Caco-2 (cell line): ENCODE measurements at regions of chr18 and their contacts with region 1.

Region 1: GRCh38 chr18:21914739-21915319 is 174.2 kb downstream of the MIB1 start:
- DNase-seq: peak; percentile 69 to 73
- H3K4me3 ChIP-seq: no peak overlapping the region
- H3K4me3 Mint-ChIP-seq: no peak overlapping the region
- H3K27ac Mint-ChIP-seq: no peak overlapping the region
- H3K4me1 ChIP-seq: peaks cover 29% of the 10 kb centered on the region
- H3K4me1 Mint-ChIP-seq: peaks cover 24% of the 10 kb centered on the region
- H3K27me3 ChIP-seq: no peaks in the 10 kb centered on the region
- H3K27me3 Mint-ChIP-seq: no peaks in the 10 kb centered on the region
- CTCF ChIP-seq: peak; percentile 78 to 84

Region 2: GRCh38 chr18:21741511-21742314 is 173.1 kb before region 1 on chr18:
- CTCF ChIA-PET with region 1: no interaction called
- POLR2A ChIA-PET with region 1: no interaction called
- intact Hi-C with region 1: no loop called
- DNase-seq: peak in 1 of 2 experiments; percentile 46
- H3K4me3 ChIP-seq: peak overlapping the region; percentile 99
- H3K4me3 Mint-ChIP-seq: peak overlapping the region; percentile 74
- H3K27ac Mint-ChIP-seq: no peak overlapping the region
- H3K4me1 ChIP-seq: peaks cover 6% of the 10 kb centered on the region; the same call in 1 of the 2 replicates
- H3K4me1 Mint-ChIP-seq: peaks cover 14% of the 10 kb centered on the region
- H3K27me3 ChIP-seq: no peaks in the 10 kb centered on the region
- H3K27me3 Mint-ChIP-seq: no peaks in the 10 kb centered on the region
- CTCF ChIP-seq: peak in 1 of 2 experiments; percentile 18

Region 3: DNA sequence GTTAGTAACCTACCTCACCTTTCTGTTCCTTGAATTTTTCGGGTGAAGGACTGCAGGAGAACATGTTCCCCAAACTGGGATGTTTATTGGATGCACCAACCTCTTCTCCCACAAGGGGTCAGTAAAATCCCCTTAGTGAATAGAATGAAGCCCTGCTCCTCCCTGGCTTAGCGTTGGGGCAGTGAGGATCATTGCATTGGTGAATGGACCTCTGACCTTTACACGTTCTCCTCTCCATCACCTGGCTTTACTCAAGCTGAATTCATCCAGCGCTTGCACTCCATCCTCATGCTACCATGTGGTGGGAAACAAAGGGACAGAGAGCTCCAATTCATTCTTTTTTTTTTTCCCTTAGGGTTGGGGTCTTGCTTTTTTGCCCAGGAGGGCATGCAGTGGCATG is 17.0 kb before region 1 on chr18:
- CTCF ChIA-PET with region 1: no interaction called
- POLR2A ChIA-PET with region 1: no interaction called
- intact Hi-C with region 1: loop called (anchors 1 kb)
- DNase-seq: peak; percentile 67 to 80
- H3K4me3 ChIP-seq: no peak overlapping the region
- H3K4me3 Mint-ChIP-seq: no peak overlapping the region
- H3K27ac Mint-ChIP-seq: no peak overlapping the region
- H3K4me1 ChIP-seq: no peaks in the 10 kb centered on the region
- H3K4me1 Mint-ChIP-seq: peaks cover 11% of the 10 kb centered on the region
- H3K27me3 ChIP-seq: no peaks in the 10 kb centered on the region
- H3K27me3 Mint-ChIP-seq: no peaks in the 10 kb centered on the region
- CTCF ChIP-seq: peak; percentile 66 to 82

Region 4: DNA sequence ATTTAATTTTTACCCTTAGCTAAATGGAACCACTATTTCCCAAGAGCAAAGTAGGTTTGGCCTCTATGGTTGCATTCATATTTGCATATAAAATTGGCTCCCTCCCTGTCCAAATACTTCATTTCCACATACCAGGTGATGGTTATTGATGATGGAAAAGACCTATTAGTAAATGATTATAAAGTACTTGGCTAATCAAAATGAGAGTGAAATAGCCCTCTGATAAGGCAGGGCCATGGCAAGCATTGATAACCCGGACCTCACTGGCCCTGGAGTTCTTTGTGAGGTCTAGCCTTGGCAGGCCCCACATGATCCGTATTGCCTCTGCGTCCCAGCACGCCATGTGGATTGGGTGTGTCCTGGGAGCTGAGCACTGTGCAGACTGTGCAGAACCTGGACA is 53.5 kb after region 1 on chr18:
- CTCF ChIA-PET with region 1: no interaction called
- POLR2A ChIA-PET with region 1: no interaction called
- intact Hi-C with region 1: no loop called
- DNase-seq: no peak
- H3K4me3 ChIP-seq: no peak overlapping the region
- H3K4me3 Mint-ChIP-seq: no peak overlapping the region
- H3K27ac Mint-ChIP-seq: no peak overlapping the region
- H3K4me1 ChIP-seq: peaks cover 6% of the 10 kb centered on the region; the same call in 1 of the 2 replicates
- H3K4me1 Mint-ChIP-seq: no peaks in the 10 kb centered on the region
- H3K27me3 ChIP-seq: no peaks in the 10 kb centered on the region
- H3K27me3 Mint-ChIP-seq: no peaks in the 10 kb centered on the region
- CTCF ChIP-seq: no peak

Region 5: GRCh38 chr18:21991081-21991581 is 76.3 kb after region 1 on chr18:
- CTCF ChIA-PET with region 1: no interaction called
- POLR2A ChIA-PET with region 1: no interaction called
- intact Hi-C with region 1: loop called (anchors 2 kb)
- DNase-seq: peak; percentile 91 to 96
- H3K4me3 ChIP-seq: no peak overlapping the region
- H3K4me3 Mint-ChIP-seq: peak overlapping the region; percentile 59
- H3K27ac Mint-ChIP-seq: peak overlapping the region; percentile 96
- H3K4me1 ChIP-seq: peaks cover 76% of the 10 kb centered on the region
- H3K4me1 Mint-ChIP-seq: peaks cover 31% of the 10 kb centered on the region
- H3K27me3 ChIP-seq: no peaks in the 10 kb centered on the region
- H3K27me3 Mint-ChIP-seq: no peaks in the 10 kb centered on the region
- CTCF ChIP-seq: no peak

Region 6: GRCh38 chr18:22084547-22084946 is 169.7 kb after region 1 on chr18:
- CTCF ChIA-PET with region 1: interaction called, 3 read pairs
- POLR2A ChIA-PET with region 1: no interaction called
- intact Hi-C with region 1: loop called (anchors 10 kb)
- DNase-seq: peak; percentile 78 to 91
- H3K4me3 ChIP-seq: peak overlapping the region; percentile 3; the same call in 1 of the 2 replicates
- H3K4me3 Mint-ChIP-seq: peak overlapping the region; percentile 69
- H3K27ac Mint-ChIP-seq: peak overlapping the region; percentile 87
- H3K4me1 ChIP-seq: peaks cover 75% of the 10 kb centered on the region
- H3K4me1 Mint-ChIP-seq: peaks cover 61% of the 10 kb centered on the region
- H3K27me3 ChIP-seq: no peaks in the 10 kb centered on the region
- H3K27me3 Mint-ChIP-seq: no peaks in the 10 kb centered on the region
- CTCF ChIP-seq: no peak

Region 7: DNA sequence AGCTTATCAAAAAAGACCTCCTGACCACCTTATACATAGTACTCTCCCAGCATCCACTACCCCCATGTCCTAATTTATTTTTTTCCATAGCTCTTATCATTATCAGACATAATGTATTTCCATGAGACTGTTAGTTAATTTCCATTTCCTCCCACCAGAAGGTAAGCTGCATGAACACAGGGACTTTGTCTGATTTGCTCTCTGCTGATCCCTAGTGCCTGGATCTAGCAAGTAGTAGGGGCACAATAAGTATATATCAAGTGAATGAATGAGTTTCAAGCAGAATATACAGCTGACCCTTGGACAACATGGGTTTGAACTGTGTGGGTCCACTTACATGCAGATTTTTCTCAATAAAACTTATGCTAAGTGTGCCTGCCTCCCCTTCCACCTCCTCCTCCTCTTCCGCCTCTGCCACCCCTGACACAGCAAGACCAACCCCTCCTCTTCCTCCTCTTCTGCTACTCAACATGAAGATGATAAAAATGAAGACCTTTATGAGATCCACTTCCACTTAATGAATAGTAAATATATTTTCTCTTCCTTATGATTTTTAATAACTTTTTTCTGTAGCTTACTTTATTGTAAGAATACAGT is 449.1 kb after region 1 on chr18:
- CTCF ChIA-PET with region 1: no interaction called
- POLR2A ChIA-PET with region 1: no interaction called
- intact Hi-C with region 1: loop called (anchors 10 kb)
- DNase-seq: peak in 1 of 2 experiments; percentile 22
- H3K4me3 ChIP-seq: no peak overlapping the region
- H3K4me3 Mint-ChIP-seq: no peak overlapping the region
- H3K27ac Mint-ChIP-seq: no peak overlapping the region
- H3K4me1 ChIP-seq: no peaks in the 10 kb centered on the region
- H3K4me1 Mint-ChIP-seq: no peaks in the 10 kb centered on the region
- H3K27me3 ChIP-seq: no peaks in the 10 kb centered on the region
- H3K27me3 Mint-ChIP-seq: no peaks in the 10 kb centered on the region
- CTCF ChIP-seq: peak in 1 of 2 experiments; percentile 49